ENCODE measurements at regions of chr2 and their contacts with region 1.

Region 1: DNA sequence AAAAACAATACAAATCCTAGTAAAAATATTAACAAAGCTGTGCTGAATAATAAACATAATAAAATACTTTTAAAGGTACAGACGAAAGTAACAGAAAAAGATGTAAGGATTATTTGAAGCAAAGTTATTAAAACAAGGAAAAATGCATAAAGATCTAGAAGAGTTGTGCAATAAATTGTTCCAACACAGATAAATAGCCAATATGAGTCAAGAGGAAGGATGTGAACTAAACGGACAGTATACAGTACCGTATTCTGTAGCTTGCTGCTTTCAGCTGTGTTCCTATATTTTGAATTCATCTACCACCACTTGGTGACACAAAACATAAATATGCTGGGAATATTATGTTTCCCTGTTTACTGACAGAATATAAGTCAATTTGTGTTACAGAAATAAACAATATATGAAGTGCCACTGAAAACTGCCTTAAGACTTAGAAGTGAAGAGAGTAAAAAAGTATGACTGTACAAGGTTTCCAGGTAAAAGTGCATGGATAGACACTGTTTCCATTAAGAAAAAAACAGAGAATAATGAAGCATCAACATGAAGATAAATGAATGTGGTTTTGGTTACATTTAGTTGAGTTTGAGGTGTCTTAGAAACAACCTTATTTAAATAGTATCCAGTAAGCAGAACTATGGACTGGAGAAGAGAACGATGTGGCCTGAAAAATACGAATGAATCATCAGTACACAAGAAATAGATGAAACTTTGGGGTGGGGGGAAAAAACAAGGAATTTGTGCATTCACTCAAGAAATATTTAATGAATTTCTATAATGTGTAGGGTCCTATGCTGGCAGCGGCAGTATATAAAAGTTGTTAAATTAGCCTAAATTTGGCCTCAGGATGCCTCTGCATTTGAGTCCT is 13.1 kb downstream of the PPP3R1 start:
- DNase-seq: no peak
- H3K4me3 ChIP-seq: no peak overlapping the region
- H3K4me3 Mint-ChIP-seq: peak overlapping the region in 7 of 8 donors; percentile 13 to 72 (median 63)
- H3K27ac ChIP-seq: no peak overlapping the region
- H3K27ac Mint-ChIP-seq: peak overlapping the region; percentile 5 to 87 (median 38)
- H3K4me1 ChIP-seq: peaks cover 95% of the 10 kb centered on the region
- H3K4me1 Mint-ChIP-seq: peaks cover 55 to 86% (median 71%) of the 10 kb centered on the region in 4 donors
- H3K27me3 ChIP-seq: no peaks in the 10 kb centered on the region
- H3K27me3 Mint-ChIP-seq: no peaks in the 10 kb centered on the region

Region 2: DNA sequence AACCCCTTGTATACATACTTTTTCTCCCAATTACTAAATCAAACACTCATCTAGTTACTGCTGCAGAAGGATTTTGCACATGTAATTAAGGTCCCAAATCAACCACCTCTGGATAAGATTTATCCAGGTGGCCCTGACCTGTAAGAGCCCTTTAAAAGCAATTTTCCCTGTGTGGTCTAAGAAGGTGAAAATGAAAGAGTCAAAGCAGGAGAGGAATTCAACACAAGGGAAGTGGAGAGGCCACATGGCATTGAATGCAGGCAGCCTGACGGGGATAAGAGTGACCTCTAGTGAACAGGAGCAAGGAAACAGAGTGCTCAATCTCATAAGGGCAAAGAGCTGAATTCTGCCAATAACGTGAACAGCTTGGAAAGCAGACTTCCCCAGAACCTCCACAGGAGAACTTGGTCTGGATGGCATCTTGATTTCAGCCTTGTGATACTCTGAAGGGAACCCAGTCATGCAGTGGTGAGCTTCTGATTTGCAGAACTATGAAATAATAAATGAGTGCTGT is 14.0 kb before region 1 on chr2:
- CTCF ChIA-PET with region 1: interaction called, 11 read pairs
- POLR2A ChIA-PET with region 1: interaction called, 3 read pairs
- intact Hi-C with region 1: loop called (anchors 2 kb)
- DNase-seq: peak in 4 of 5 donors; percentile 11 to 26 (median 18)
- H3K4me3 ChIP-seq: no peak overlapping the region
- H3K4me3 Mint-ChIP-seq: peak overlapping the region in 6 of 8 donors; percentile 0 to 82 (median 38)
- H3K27ac ChIP-seq: no peak overlapping the region
- H3K27ac Mint-ChIP-seq: peak overlapping the region; percentile 3 to 91 (median 19)
- H3K4me1 ChIP-seq: peaks cover 94% of the 10 kb centered on the region
- H3K4me1 Mint-ChIP-seq: peaks cover 71 to 99% (median 83%) of the 10 kb centered on the region in 4 donors
- H3K27me3 ChIP-seq: no peaks in the 10 kb centered on the region
- H3K27me3 Mint-ChIP-seq: no peaks in the 10 kb centered on the region

Region 3: GRCh38 chr2:68263632-68264031 is 24.4 kb after region 1 on chr2:
- CTCF ChIA-PET with region 1: no interaction called
- POLR2A ChIA-PET with region 1: no interaction called
- intact Hi-C with region 1: no loop called
- DNase-seq: no peak
- H3K4me3 ChIP-seq: no peak overlapping the region
- H3K4me3 Mint-ChIP-seq: no peak overlapping the region
- H3K27ac ChIP-seq: no peak overlapping the region
- H3K27ac Mint-ChIP-seq: no peak overlapping the region
- H3K4me1 ChIP-seq: no peaks in the 10 kb centered on the region
- H3K4me1 Mint-ChIP-seq: peaks cover 0 to 3% (median 0%) of the 10 kb centered on the region in 4 donors
- H3K27me3 ChIP-seq: no peaks in the 10 kb centered on the region
- H3K27me3 Mint-ChIP-seq: peaks cover 0 to 2% of the 10 kb centered on the region in 2 donors

Region 4: DNA sequence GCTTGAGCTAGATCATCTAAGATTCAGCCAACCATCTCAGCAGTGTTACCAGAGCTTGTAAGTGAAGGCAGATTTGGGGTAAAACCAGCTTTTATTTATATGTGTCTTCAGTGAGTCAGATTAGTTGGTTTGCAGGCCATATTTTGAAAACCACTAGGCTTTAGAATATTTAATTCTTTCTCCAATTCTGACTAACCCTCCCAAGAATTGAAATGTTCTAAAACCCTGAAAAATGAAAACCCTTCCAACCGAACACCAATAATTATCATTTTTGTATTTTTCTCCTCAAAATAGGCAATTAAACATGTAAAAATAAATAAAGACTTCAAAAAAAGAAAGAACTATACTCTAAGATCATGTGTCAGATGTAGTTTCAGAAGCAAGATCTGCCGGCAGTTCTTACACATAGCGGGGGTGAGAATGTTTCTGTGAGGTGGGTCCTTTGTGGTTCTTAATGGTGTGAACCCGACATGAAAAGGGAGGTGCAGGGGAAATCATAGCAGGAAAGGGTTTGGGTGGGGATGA is 140.1 kb after region 1 on chr2:
- CTCF ChIA-PET with region 1: no interaction called
- POLR2A ChIA-PET with region 1: no interaction called
- intact Hi-C with region 1: no loop called
- DNase-seq: peak in 2 of 5 donors; percentile 28 to 51
- H3K4me3 ChIP-seq: no peak overlapping the region
- H3K4me3 Mint-ChIP-seq: peak overlapping the region in 6 of 8 donors; percentile 25 to 79 (median 56)
- H3K27ac ChIP-seq: peak overlapping the region; percentile 32
- H3K27ac Mint-ChIP-seq: peak overlapping the region in 6 of 7 donors; percentile 3 to 82 (median 75)
- H3K4me1 ChIP-seq: peaks cover 40% of the 10 kb centered on the region
- H3K4me1 Mint-ChIP-seq: peaks cover 10 to 58% (median 46%) of the 10 kb centered on the region in 4 donors
- H3K27me3 ChIP-seq: no peaks in the 10 kb centered on the region
- H3K27me3 Mint-ChIP-seq: no peaks in the 10 kb centered on the region